Activated naive CD8-positive, alpha-beta T cell treated with anti-CD3 and anti-CD28 coated beads, Interleukin-2, amount 10 ng/mL, durations not matched to agents 7 days and 5 days (primary cell): ENCODE measurements at regions of chr16 and their contacts with region 1.

Region 1: GRCh38 chr16:4475880-4476788 is at the start of gene HMOX2:
- DNase-seq: peak; percentile 99
- ATAC-seq: peak; percentile 78
- H3K4me3 Mint-ChIP-seq: peak within 1 kb of the TSS; percentile 95
- H3K27ac Mint-ChIP-seq: peak within 1 kb of the TSS; percentile 89
- H3K4me1 Mint-ChIP-seq: peaks cover 31% of the 10 kb centered on the region
- H3K27me3 Mint-ChIP-seq: no peaks in the 10 kb centered on the region
- total RNA-seq, gene HMOX2: 84.5 to 86.9 TPM

Region 2: DNA sequence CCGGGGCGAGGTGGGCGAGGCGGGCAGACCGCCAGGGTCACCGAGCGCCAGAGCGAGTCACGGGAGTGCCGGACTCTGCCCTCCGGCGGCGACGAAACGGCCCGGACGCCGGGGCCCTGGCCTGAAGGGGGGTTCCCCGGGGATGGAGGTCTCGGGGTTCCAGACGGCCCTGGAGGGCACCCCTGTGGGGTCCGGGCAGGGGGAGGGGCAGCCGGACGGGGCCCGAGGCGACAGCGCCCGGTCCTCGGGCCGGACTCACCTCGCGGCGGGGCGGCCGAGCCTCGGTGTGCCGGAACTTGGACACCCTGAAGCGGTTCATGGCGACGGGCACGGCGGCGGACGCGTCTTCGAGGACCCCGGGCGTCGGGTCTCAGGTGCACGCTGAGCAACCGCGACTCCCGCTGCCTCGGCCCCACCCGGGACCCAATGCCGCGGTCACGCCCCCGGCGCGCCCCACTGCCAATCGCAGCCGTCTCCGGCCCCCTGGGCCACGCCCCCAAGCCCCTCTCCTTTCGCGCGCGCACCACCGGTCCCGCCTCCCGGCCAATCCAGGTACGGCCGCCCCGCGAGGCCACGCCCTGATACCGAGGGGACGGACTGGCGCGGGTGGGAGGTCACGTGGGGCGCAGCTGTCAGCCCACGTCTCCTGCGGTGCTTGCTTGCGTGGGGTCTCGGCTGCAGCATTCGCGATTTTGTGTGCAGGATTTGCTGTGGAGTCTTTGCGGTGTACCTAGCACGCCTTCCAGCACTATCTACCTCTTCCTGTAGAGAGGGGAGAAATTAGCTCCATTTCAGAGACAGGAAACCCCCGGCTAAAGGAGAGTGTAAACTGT is 59.7 kb before region 1 on chr16 and contains the start of gene CORO7:
- POLR2A ChIA-PET with region 1: interaction called, 41 read pairs
- DNase-seq: peak; percentile 99
- ATAC-seq: peak; percentile 69
- H3K4me3 Mint-ChIP-seq: peak within 1 kb of the TSS; percentile 92
- H3K27ac Mint-ChIP-seq: peak within 1 kb of the TSS; percentile 96
- H3K4me1 Mint-ChIP-seq: peaks cover 22% of the 10 kb centered on the region
- H3K27me3 Mint-ChIP-seq: no peaks in the 10 kb centered on the region
- total RNA-seq, gene CORO7: 168 to 186 TPM

Region 3: DNA sequence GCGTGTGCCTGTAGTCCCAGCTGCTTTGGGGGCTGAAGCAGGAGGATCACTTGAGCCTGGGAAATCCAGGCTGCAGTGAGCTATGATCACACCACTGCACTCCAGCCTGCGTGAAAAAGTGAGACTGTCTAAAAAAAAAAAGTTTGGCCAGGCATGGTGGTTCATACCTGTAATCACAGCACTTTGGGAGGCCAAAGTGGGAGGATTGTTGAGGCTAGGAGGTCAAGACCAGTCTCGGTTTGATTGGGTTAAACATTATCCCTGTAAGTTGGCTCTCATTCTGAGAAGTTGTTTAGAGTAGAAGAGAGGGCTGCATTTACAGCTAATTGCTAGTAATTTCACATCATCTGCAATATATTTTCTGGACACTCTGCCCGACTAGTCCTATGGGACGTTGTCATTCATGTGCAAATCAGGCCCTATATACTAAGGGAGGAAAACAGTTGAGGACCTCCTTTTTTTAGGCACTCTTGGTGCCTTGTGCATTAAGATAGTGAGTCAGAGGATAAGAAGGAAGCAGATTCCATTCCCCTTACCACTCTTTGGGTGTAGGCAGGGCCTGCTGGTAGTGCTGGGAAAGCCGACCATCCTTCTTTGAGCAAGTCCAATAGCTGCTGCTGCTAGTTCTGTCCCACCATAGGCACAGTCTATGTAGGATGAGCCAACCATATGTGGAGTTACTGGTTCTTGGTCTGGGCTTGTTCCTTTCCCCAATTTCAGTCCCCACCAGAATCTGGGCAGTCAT is 18.8 kb after region 1 on chr16:
- POLR2A ChIA-PET with region 1: interaction called, 112 read pairs
- DNase-seq: no peak
- ATAC-seq: no peak
- H3K4me3 Mint-ChIP-seq: no peak overlapping the region
- H3K27ac Mint-ChIP-seq: no peak overlapping the region
- H3K4me1 Mint-ChIP-seq: peaks cover 53% of the 10 kb centered on the region
- H3K27me3 Mint-ChIP-seq: no peaks in the 10 kb centered on the region

Region 4: GRCh38 chr16:4506450-4506849 is 30.3 kb after region 1 on chr16:
- POLR2A ChIA-PET with region 1: interaction called, 105 read pairs
- DNase-seq: peak; percentile 49
- ATAC-seq: peak; percentile 48
- H3K4me3 Mint-ChIP-seq: peak overlapping the region; percentile 67
- H3K27ac Mint-ChIP-seq: peak overlapping the region; percentile 91
- H3K4me1 Mint-ChIP-seq: peaks cover 47% of the 10 kb centered on the region
- H3K27me3 Mint-ChIP-seq: no peaks in the 10 kb centered on the region

Region 5: GRCh38 chr16:4550591-4550990 is 74.5 kb after region 1 on chr16:
- POLR2A ChIA-PET with region 1: interaction called, 16 read pairs
- DNase-seq: no peak
- ATAC-seq: no peak
- H3K4me3 Mint-ChIP-seq: no peak overlapping the region
- H3K27ac Mint-ChIP-seq: no peak overlapping the region
- H3K4me1 Mint-ChIP-seq: peaks cover 6% of the 10 kb centered on the region
- H3K27me3 Mint-ChIP-seq: peaks cover 9% of the 10 kb centered on the region